A673 (cell line): ENCODE measurements at regions of chr1 and their contacts with region 1.

Region 1: DNA sequence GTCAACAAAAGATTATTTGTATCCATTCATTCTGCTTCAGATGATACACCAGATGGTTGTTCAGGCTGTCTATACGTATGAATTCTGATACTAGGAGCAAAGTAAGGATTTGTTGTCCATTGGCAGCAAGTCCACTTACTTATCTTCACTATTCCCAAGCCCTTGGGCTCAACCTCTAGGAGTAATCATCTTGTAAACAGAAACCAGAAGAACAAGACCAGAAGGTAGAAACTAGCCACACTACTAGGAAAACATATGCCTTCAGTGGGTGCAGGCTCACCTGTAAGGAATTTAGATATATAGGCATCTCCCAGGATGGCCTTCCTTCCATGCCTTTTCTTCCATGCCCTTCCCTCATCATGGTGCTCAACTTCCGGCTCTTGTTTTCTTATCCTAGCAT is 243.0 kb upstream of the ESRRG start:
- DNase-seq: no peak
- H3K4me3 ChIP-seq: no peak overlapping the region
- H3K27ac ChIP-seq: no peak overlapping the region
- H3K4me1 ChIP-seq: no peaks in the 10 kb centered on the region
- H3K27me3 ChIP-seq: no peaks in the 10 kb centered on the region
- CTCF ChIP-seq: no peak

Region 2: GRCh38 chr1:216238844-216239243 is 727.4 kb before region 1 on chr1:
- CTCF ChIA-PET with region 1: no interaction called
- POLR2A ChIA-PET with region 1: interaction called, 15 read pairs
- intact Hi-C with region 1: no loop called
- DNase-seq: no peak
- H3K4me3 ChIP-seq: no peak overlapping the region
- H3K27ac ChIP-seq: no peak overlapping the region
- H3K4me1 ChIP-seq: no peaks in the 10 kb centered on the region
- H3K27me3 ChIP-seq: peaks cover 53% of the 10 kb centered on the region
- CTCF ChIP-seq: no peak

Region 3: GRCh38 chr1:216884614-216885229 is 81.6 kb before region 1 on chr1:
- CTCF ChIA-PET with region 1: no interaction called
- POLR2A ChIA-PET with region 1: no interaction called
- intact Hi-C with region 1: no loop called
- DNase-seq: no peak
- H3K4me3 ChIP-seq: no peak overlapping the region
- H3K27ac ChIP-seq: no peak overlapping the region
- H3K4me1 ChIP-seq: no peaks in the 10 kb centered on the region
- H3K27me3 ChIP-seq: peaks cover 20% of the 10 kb centered on the region
- CTCF ChIP-seq: no peak